HAP-1 (cell line): ENCODE measurements at regions of chr4 and their contacts with region 1.

Region 1: DNA sequence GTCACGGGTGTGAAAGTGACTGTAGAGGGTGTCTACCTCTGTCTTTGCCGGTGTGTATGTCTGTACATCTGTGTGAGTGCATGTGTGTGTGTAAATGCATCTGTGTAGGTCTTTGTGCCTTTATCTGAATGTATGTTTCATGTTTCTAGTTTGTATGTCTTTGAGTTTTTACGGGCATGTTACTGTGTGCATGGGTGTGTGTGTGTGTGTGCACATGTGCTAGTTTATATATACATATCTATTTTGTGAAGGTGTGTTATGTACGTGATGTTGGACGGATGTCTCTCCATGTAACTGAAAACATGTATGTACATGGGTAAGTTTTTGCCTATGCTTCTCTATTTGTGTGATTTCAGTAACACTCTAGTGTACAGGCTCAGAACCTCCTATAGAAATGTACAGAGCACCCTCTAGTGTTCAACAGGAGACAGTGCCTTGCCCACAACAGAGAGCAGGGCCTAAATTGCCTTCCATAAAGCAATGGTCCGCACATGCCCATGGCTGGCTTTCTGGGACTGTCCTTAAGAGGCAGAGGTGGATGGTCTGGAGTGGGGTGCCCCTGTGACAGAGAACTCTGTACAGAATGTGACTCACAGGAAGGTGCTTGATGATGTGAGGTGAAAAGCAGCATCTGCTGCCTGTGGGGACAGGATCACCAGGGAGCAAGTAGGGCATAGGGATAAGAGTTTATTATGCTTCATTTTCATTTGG is 343.5 kb downstream of the RAPGEF2 start:
- DNase-seq: peak; percentile 56 to 70
- H3K4me3 ChIP-seq: no peak overlapping the region
- H3K4me1 ChIP-seq: peaks cover 4% of the 10 kb centered on the region
- H3K27me3 ChIP-seq: peaks cover 2% of the 10 kb centered on the region; the same call in 1 of the 2 replicates

Region 2: DNA sequence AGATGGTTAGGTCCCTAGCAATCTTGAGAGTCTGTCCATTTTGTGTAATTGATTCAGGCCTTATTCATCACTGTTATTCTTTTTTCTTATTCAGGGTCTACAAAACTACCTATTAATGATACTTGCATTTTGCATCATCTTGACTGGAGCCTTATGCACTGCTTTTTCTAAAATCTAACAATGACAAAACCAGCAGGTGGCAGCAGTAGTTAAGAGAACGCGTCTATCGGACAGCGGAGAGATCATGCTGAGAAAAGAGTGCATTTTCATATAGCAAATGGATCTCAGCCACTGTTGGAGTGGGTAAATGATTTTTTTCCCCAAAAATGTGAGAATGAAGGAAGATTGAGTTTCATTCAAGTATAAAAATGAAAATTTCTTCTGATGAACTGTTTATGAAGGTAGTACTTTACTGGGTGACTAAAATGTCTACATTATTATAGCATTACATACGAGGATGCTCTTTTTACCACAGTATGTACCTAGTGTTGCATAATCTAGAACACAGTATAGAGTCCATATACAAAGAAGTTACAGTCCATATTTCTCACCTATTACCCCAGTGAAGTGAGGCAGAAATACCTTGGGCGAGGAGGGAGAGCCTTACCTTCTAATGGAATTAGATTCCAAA is 1193.0 kb before region 1 on chr4:
- in situ Hi-C with region 1: loop called (anchors 25 kb)
- DNase-seq: peak; percentile 77
- H3K4me3 ChIP-seq: no peak overlapping the region
- H3K4me1 ChIP-seq: peaks cover 14% of the 10 kb centered on the region
- H3K27me3 ChIP-seq: 0 out of 2 replicates have a peak, but pooled peaks cover 2% of the 10 kb centered on the region

Region 3: GRCh38 chr4:159201168-159201567 is 245.3 kb before region 1 on chr4:
- in situ Hi-C with region 1: loop called (anchors 5 kb)
- DNase-seq: peak; percentile 50 to 95
- H3K4me3 ChIP-seq: no peak overlapping the region
- H3K4me1 ChIP-seq: peaks cover 16% of the 10 kb centered on the region
- H3K27me3 ChIP-seq: no peaks in the 10 kb centered on the region